H1 (cell line): ENCODE measurements at regions of chr1 and their contacts with region 1.

Region 1: DNA sequence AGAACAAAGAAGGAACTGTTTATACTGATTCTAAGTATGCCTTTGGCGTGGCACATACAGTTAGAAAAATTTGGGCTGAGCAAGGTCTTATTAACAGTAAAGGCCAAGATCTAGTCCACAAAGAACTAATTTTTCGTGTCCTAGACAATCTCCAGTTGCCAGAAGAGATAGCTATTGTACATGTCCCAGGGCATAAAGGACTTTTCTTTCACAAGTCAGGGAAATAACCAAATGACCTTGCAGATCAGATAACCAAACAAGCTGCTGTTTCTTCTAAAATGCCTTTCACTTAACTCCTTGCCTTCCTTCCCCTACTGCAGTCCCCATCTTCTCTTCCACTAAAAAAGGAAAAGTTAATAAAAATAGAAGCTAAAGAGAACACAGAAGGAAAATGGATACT is 4.0 kb downstream of the TEX50 start:
- DNase-seq: no peak
- H3K4me3 ChIP-seq: peak overlapping the region; percentile 11 to 61 (median 36); a peak in 6 of 8 replicates
- H3K27ac ChIP-seq: peak overlapping the region; percentile 17; the same call in 1 of the 2 replicates
- H3K4me1 ChIP-seq: peaks cover 0 to 2% (median under 1%) of the 10 kb centered on the region in 4 experiments; a peak in 4 of 7 replicates
- H3K27me3 ChIP-seq: no peaks in the 10 kb centered on the region
- CTCF ChIP-seq: no peak
- EP300 ChIP-seq: no peak
- POLR2A ChIP-seq: peak; percentile 56 to 87
- RAD21 ChIP-seq: no peak

Region 2: DNA sequence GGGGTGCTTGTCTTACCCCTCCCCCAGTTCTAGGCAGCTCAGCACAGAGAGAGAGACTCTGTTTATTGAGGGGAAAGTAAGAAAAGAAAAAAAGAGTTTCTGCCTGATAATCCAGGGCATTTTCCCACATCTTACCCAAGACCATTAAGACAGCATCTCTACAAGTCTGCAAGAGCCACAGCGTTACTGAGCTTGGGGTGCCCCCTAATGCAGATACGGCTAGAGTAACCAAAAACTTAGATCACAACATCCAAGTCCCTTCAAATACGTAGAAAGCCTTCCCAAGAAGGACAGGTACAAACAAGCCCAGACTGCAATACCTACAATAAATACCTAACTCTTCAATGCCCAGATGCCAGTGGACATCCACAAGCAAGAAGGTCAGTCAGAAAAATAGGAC is 10.2 kb before region 1 on chr1:
- CTCF ChIA-PET with region 1: no interaction called
- POLR2A ChIA-PET with region 1: interaction called, 14 read pairs
- DNase-seq: no peak
- H3K4me3 ChIP-seq: no peak overlapping the region
- H3K27ac ChIP-seq: no peak overlapping the region
- H3K4me1 ChIP-seq: no peaks in the 10 kb centered on the region
- H3K27me3 ChIP-seq: no peaks in the 10 kb centered on the region
- CTCF ChIP-seq: peak in 2 of 3 experiments; percentile 17 to 36; a peak in 2 of 4 replicates
- EP300 ChIP-seq: no peak
- POLR2A ChIP-seq: no peak
- RAD21 ChIP-seq: peak; percentile 63 to 69